ENCODE measurements at regions of chr1 and their contacts with region 1.

Region 1: GRCh38 chr1:26864610-26865527 is 1.9 kb downstream of the SFN start:
- DNase-seq: peak; percentile 89 to 97 (median 93)
- ATAC-seq: peak; percentile 96
- H3K4me3 ChIP-seq: peak overlapping the region; percentile 60 to 88
- H3K4me3 Mint-ChIP-seq: peak overlapping the region; percentile 97
- H3K27ac ChIP-seq: peak overlapping the region; percentile 52 to 80
- H3K27ac Mint-ChIP-seq: peak overlapping the region; percentile 91
- H3K4me1 ChIP-seq: peaks cover 4% of the 10 kb centered on the region
- H3K4me1 Mint-ChIP-seq: peaks cover 15% of the 10 kb centered on the region
- H3K27me3 ChIP-seq: no peaks in the 10 kb centered on the region
- H3K27me3 Mint-ChIP-seq: no peaks in the 10 kb centered on the region
- CTCF ChIP-seq: no peak

Region 2: DNA sequence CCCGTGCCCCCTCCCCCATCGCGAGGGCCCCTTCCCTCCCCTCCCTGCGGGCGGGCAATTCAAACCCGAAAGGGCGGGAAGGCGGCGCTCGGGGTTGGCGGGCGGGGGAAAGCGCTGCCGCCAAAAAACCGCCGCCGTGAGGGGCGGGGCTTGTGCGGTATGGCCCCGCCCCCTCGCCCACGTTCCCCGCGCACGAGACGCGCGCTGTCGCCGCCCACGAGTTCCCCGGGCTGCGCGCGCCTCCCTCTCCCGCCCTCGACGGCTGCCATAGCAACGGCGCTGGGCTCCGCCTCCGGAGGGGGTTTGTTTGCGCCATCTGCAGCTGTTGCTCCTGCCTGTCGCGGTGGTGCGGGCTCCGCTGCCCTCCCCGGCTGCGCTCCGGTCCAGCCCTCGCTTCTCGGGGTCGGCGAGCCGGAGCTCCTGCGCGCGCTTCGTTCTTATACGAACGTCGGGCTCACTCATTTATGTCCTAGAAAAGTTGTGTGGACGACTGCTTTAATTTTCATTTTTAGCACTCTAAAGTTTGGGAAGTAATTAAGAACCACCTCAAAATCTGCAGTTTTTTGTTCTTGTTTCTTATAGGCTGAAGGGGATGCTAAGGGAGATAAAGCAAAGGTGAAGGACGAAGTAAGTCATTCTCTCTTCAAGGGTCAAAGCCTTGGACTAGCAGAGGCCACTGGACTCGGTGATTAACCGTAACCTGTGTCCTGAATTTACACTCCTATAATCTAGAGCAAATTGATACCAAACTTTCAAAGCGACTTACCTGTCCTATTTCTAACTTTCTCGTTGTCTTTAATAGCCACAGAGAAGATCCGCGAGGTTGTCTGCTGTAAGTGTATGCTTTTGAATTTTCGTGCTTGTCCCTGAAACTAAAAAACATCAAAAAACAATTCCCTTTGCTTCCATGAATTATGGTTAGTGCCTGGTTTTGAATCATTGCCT is 391.7 kb before region 1 on chr1:
- CTCF ChIA-PET with region 1: no interaction called
- POLR2A ChIA-PET with region 1: no interaction called
- intact Hi-C with region 1: loop called (anchors 1 kb)
- DNase-seq: peak; percentile 94 to 99 (median 98)
- ATAC-seq: peak; percentile 86
- H3K4me3 ChIP-seq: peak overlapping the region; percentile 48 to 72
- H3K4me3 Mint-ChIP-seq: peak overlapping the region; percentile 85
- H3K27ac ChIP-seq: peak overlapping the region; percentile 93 to 94
- H3K27ac Mint-ChIP-seq: peak overlapping the region; percentile 78
- H3K4me1 ChIP-seq: peaks cover 32% of the 10 kb centered on the region
- H3K4me1 Mint-ChIP-seq: peaks cover 51% of the 10 kb centered on the region
- H3K27me3 ChIP-seq: no peaks in the 10 kb centered on the region
- H3K27me3 Mint-ChIP-seq: no peaks in the 10 kb centered on the region
- CTCF ChIP-seq: no peak

Region 3: DNA sequence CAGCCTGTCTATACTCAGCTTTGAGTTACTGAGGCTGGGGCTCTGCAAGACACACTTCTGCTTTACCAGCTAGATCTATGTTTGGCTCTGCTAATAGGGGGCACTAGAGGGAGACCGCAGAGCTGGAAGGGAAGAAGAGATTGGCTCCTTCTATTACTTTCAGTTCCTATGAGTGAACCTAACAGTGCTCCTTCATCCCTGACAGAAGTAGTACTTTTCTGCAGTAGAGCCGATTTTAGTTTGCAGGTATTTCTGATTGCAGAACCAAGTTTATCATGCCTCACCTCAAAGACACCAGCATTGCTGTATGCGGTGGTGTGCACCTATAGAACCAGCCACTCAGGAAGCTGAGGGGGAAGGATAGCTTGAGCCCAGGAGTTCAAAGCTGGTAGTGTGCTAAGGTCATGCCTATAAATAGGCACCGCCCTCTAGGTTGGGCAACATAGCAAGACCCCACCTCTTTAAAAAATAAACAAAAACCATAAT is 44.0 kb before region 1 on chr1:
- CTCF ChIA-PET with region 1: interaction called, 4 read pairs
- POLR2A ChIA-PET with region 1: interaction called, 11 read pairs
- intact Hi-C with region 1: loop called in 1 of 2 experiments (anchors 2 kb)
- DNase-seq: peak in 6 of 9 experiments; percentile 11 to 81 (median 53)
- ATAC-seq: peak; percentile 97
- H3K4me3 ChIP-seq: peak overlapping the region; percentile 23 to 25
- H3K4me3 Mint-ChIP-seq: peak overlapping the region; percentile 82
- H3K27ac ChIP-seq: peak overlapping the region in 1 of 2 experiments; percentile 60
- H3K27ac Mint-ChIP-seq: peak overlapping the region; percentile 89
- H3K4me1 ChIP-seq: peaks cover 21% of the 10 kb centered on the region
- H3K4me1 Mint-ChIP-seq: peaks cover 27% of the 10 kb centered on the region
- H3K27me3 ChIP-seq: no peaks in the 10 kb centered on the region
- H3K27me3 Mint-ChIP-seq: no peaks in the 10 kb centered on the region
- CTCF ChIP-seq: peak; percentile 57

Region 4: GRCh38 chr1:26853156-26853555 is 11.7 kb before region 1 on chr1:
- CTCF ChIA-PET with region 1: interaction called, 13 read pairs
- POLR2A ChIA-PET with region 1: interaction called, 5 read pairs
- intact Hi-C with region 1: loop called in 1 of 2 experiments (anchors 1 kb)
- DNase-seq: peak; percentile 58 to 90 (median 80)
- ATAC-seq: peak; percentile 94
- H3K4me3 ChIP-seq: no peak overlapping the region
- H3K4me3 Mint-ChIP-seq: no peak overlapping the region
- H3K27ac ChIP-seq: no peak overlapping the region
- H3K27ac Mint-ChIP-seq: no peak overlapping the region
- H3K4me1 ChIP-seq: no peaks in the 10 kb centered on the region
- H3K4me1 Mint-ChIP-seq: no peaks in the 10 kb centered on the region
- H3K27me3 ChIP-seq: no peaks in the 10 kb centered on the region
- H3K27me3 Mint-ChIP-seq: no peaks in the 10 kb centered on the region
- CTCF ChIP-seq: peak; percentile 78

Region 5: GRCh38 chr1:26882696-26883463 is 18.0 kb after region 1 on chr1:
- CTCF ChIA-PET with region 1: interaction called, 17 read pairs
- POLR2A ChIA-PET with region 1: interaction called, 6 read pairs
- intact Hi-C with region 1: loop called in 1 of 2 experiments (anchors 2 kb)
- DNase-seq: no peak
- ATAC-seq: no peak
- H3K4me3 ChIP-seq: no peak overlapping the region
- H3K4me3 Mint-ChIP-seq: no peak overlapping the region
- H3K27ac ChIP-seq: no peak overlapping the region
- H3K27ac Mint-ChIP-seq: no peak overlapping the region
- H3K4me1 ChIP-seq: no peaks in the 10 kb centered on the region
- H3K4me1 Mint-ChIP-seq: peaks cover 18% of the 10 kb centered on the region
- H3K27me3 ChIP-seq: no peaks in the 10 kb centered on the region
- H3K27me3 Mint-ChIP-seq: no peaks in the 10 kb centered on the region
- CTCF ChIP-seq: no peak

Region 6: GRCh38 chr1:26900001-26900814 is 35.3 kb after region 1 on chr1 and contains the start of gene GPATCH3:
- CTCF ChIA-PET with region 1: interaction called, 3 read pairs
- POLR2A ChIA-PET with region 1: interaction called, 17 read pairs
- intact Hi-C with region 1: loop called in 1 of 2 experiments (anchors 1 kb)
- DNase-seq: peak; percentile 78 to 94 (median 88)
- ATAC-seq: peak; percentile 91
- H3K4me3 ChIP-seq: peak within 1 kb of the TSS; percentile 65 to 75
- H3K4me3 Mint-ChIP-seq: peak within 1 kb of the TSS; percentile 89
- H3K27ac ChIP-seq: peak within 1 kb of the TSS; percentile 70 to 85
- H3K27ac Mint-ChIP-seq: peak within 1 kb of the TSS; percentile 95
- H3K4me1 ChIP-seq: peaks cover 18% of the 10 kb centered on the region
- H3K4me1 Mint-ChIP-seq: peaks cover 27% of the 10 kb centered on the region
- H3K27me3 ChIP-seq: peaks cover 0 to 2% of the 10 kb centered on the region in 2 experiments
- H3K27me3 Mint-ChIP-seq: no peaks in the 10 kb centered on the region
- CTCF ChIP-seq: no peak
- total RNA-seq, gene GPATCH3: 47.8 to 47.9 TPM

Region 7: GRCh38 chr1:26913754-26914619 is 49.1 kb after region 1 on chr1 and contains the start of gene NR0B2:
- CTCF ChIA-PET with region 1: no interaction called
- POLR2A ChIA-PET with region 1: no interaction called
- intact Hi-C with region 1: no loop called
- DNase-seq: no peak
- ATAC-seq: no peak
- H3K4me3 ChIP-seq: no peak within 1 kb of the TSS
- H3K4me3 Mint-ChIP-seq: no peak within 1 kb of the TSS
- H3K27ac ChIP-seq: no peak within 1 kb of the TSS
- H3K27ac Mint-ChIP-seq: no peak within 1 kb of the TSS
- H3K4me1 ChIP-seq: no peaks in the 10 kb centered on the region
- H3K4me1 Mint-ChIP-seq: no peaks in the 10 kb centered on the region
- H3K27me3 ChIP-seq: no peaks in the 10 kb centered on the region
- H3K27me3 Mint-ChIP-seq: no peaks in the 10 kb centered on the region
- CTCF ChIP-seq: no peak
- total RNA-seq, gene NR0B2: not detected

Region 8: GRCh38 chr1:27021354-27022031 is 156.6 kb after region 1 on chr1:
- CTCF ChIA-PET with region 1: no interaction called
- POLR2A ChIA-PET with region 1: no interaction called
- intact Hi-C with region 1: no loop called
- DNase-seq: no peak
- ATAC-seq: no peak
- H3K4me3 ChIP-seq: no peak overlapping the region
- H3K4me3 Mint-ChIP-seq: no peak overlapping the region
- H3K27ac ChIP-seq: no peak overlapping the region
- H3K27ac Mint-ChIP-seq: no peak overlapping the region
- H3K4me1 ChIP-seq: no peaks in the 10 kb centered on the region
- H3K4me1 Mint-ChIP-seq: no peaks in the 10 kb centered on the region
- H3K27me3 ChIP-seq: no peaks in the 10 kb centered on the region
- H3K27me3 Mint-ChIP-seq: no peaks in the 10 kb centered on the region
- CTCF ChIP-seq: no peak

Measured in CD8-positive, alpha-beta T cell (primary cell).